PC-3 (cell line): ENCODE measurements at regions of chr5 and their contacts with region 1.

Region 1: GRCh38 chr5:39148983-39149534 is 70.3 kb downstream of the FYB1 start:
- DNase-seq: peak; percentile 74
- ATAC-seq: peak; percentile 69
- H3K4me3 ChIP-seq: no peak overlapping the region
- H3K27ac ChIP-seq: peak overlapping the region; percentile 47; the same call in 1 of the 2 replicates
- H3K4me1 ChIP-seq: peaks cover 7% of the 10 kb centered on the region
- H3K27me3 ChIP-seq: no peaks in the 10 kb centered on the region
- CTCF ChIP-seq: peak; percentile 79

Region 2: DNA sequence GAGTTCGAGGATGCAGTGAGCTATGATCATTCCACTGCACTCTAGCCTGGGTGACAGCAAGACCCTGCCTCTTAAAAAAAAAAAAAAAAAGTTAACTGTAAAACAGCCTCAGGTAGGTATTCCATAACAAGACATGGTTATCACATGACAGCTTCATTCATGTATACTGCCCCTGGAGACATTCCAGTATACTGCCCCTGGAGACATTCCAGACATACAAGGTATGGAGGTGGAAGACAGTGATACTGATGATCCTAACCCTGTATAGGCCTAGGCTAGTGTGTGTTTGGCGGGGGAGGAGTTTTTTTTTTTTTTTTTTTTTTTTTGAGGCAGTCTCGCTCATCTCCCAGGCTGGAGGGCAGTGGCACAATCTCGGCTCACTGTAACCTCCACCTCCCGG is 180.4 kb before region 1 on chr5:
- CTCF ChIA-PET with region 1: no interaction called
- POLR2A ChIA-PET with region 1: no interaction called
- intact Hi-C with region 1: no loop called
- DNase-seq: peak; percentile 11
- ATAC-seq: no peak
- H3K4me3 ChIP-seq: no peak overlapping the region
- H3K27ac ChIP-seq: no peak overlapping the region
- H3K4me1 ChIP-seq: no peaks in the 10 kb centered on the region
- H3K27me3 ChIP-seq: no peaks in the 10 kb centered on the region
- CTCF ChIP-seq: no peak

Region 3: DNA sequence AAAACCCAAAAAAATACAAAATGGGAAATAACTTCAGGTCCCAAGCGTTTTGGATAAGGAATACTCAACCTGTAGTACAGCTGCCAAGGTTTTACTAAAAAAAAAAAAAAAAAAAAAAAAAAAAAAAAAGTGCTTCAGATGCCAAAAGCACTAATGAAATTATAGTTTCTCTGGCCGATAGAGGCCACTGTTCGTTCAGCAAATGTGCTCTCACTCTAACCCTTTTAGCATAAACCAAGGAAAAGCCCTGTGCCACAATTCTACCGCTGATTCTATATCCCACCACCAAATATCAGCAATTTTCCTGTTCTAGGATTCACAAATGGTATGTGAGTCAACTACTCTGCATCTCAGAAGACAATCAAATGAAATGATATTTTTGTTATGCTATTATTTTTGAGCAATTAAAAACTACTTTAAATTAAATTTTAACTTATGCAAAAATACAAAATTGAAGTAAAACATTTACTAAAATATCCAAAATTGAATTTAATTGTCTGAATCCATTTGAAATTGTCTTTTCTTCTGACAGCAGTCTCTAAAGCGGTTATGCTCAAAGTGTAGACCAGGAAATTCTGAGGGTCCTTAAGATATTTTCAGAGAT is 154.6 kb before region 1 on chr5:
- CTCF ChIA-PET with region 1: interaction called, 10 read pairs
- POLR2A ChIA-PET with region 1: no interaction called
- intact Hi-C with region 1: loop called (anchors 1 kb)
- DNase-seq: peak; percentile 89
- ATAC-seq: peak; percentile 78
- H3K4me3 ChIP-seq: no peak overlapping the region
- H3K27ac ChIP-seq: no peak overlapping the region
- H3K4me1 ChIP-seq: no peaks in the 10 kb centered on the region
- H3K27me3 ChIP-seq: no peaks in the 10 kb centered on the region
- CTCF ChIP-seq: peak; percentile 82

Region 4: DNA sequence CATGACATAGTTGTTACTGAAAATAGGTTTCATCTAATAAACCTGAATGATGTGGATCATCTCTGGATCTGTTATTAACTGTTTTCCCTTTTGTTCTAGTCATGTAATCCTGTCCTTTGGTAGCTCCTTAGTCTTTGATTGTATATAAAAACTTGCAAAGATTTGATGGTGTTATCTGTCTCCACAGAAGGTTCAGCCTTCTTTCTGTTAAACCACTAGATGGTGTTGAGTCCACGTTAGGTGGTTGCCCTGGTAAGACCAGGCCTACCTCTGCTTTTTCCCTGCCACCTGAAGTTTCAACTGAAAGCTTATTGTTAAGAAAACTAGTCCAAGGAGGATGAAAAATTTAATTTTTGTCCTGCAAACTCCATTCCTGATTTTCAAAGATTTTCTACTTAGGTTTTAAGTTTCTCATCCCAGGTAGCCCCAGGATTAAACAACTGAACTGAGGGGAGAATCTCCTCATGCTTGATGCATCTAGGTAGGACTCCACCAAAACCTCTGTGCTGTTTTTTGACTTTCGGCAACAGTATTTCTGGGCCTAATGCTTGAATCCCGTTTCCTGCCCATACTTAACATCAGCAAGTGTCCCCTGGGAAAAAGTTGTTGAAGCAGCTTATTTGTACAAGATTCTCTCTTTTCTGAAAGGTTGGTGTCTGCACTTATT is 143.4 kb before region 1 on chr5:
- CTCF ChIA-PET with region 1: no interaction called
- POLR2A ChIA-PET with region 1: no interaction called
- intact Hi-C with region 1: loop called (anchors 5 kb)
- DNase-seq: peak; percentile 55
- ATAC-seq: peak; percentile 79
- H3K4me3 ChIP-seq: no peak overlapping the region
- H3K27ac ChIP-seq: no peak overlapping the region
- H3K4me1 ChIP-seq: no peaks in the 10 kb centered on the region
- H3K27me3 ChIP-seq: no peaks in the 10 kb centered on the region
- CTCF ChIP-seq: peak; percentile 80

Region 5: DNA sequence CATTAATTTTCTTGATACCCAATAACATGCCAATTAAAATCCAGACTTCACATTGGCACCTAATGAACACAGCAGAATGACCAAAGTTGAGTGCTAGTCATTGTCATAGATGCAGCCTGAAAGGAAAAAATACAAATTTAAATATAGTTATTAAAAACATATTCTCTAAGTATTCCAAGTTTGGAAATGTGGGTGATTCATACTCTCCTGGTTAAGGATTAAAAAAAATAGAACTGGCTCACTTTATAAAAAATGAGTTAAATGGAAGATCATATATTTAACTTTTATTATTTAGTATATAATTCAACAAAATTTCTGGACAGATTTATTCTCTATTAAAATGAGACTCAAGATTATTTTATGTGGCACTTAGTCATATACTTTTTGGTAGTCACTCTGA is 41.7 kb before region 1 on chr5:
- CTCF ChIA-PET with region 1: no interaction called
- POLR2A ChIA-PET with region 1: no interaction called
- intact Hi-C with region 1: loop called (anchors 1 kb)
- DNase-seq: no peak
- ATAC-seq: peak; percentile 59; the same call in 1 of the 2 replicates
- H3K4me3 ChIP-seq: no peak overlapping the region
- H3K27ac ChIP-seq: 0 out of 2 replicates have a peak overlapping the region, but pooled peaks have one; percentile 4
- H3K4me1 ChIP-seq: peaks cover 39% of the 10 kb centered on the region
- H3K27me3 ChIP-seq: no peaks in the 10 kb centered on the region
- CTCF ChIP-seq: no peak

Region 6: DNA sequence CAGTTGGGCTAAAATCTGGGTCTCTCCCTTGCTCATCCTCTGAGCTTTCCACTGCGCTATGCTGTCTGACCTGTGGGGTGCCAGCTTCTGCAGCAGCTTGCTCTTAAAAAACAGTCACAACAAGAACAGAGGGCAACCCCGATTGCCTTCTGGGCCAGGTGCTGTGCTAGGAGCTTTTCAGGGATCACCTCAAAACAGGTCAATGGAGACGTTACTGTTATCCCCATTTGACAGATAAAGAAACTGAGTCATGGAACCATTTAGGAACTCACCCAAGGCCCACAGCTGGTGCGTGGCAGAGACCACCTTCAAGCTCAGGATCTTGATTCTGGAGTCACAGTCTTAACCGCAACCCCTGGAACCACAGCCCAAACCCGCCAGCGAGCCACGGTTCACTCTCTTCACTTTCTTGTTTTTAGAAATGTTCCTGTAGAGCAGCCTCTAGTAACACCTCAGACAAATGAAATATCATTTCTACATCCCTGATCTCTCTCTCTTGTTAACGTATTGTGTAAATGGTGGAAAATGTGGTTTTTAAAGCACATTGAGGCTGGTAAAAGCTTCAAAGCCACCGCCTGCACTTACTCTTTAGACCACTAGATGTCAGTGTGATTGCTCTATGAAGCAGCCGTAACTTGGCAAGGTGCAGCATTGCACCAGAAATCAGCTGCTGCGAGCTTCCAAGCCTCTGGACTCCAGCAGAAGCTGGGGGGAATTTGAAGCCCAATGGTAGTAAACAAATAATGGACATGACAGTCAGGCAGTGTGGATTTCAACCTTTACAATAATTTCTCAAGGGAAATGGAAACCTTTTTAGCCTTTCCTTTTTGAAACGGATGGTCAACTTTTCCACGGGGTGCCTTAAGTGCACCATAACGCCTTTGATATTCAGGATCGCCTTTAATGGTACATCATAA is 68.6 kb after region 1 on chr5:
- CTCF ChIA-PET with region 1: no interaction called
- POLR2A ChIA-PET with region 1: no interaction called
- intact Hi-C with region 1: loop called (anchors 2 kb)
- DNase-seq: peak; percentile 95
- ATAC-seq: peak; percentile 39; the same call in 1 of the 2 replicates
- H3K4me3 ChIP-seq: no peak overlapping the region
- H3K27ac ChIP-seq: no peak overlapping the region
- H3K4me1 ChIP-seq: peaks cover 25% of the 10 kb centered on the region
- H3K27me3 ChIP-seq: no peaks in the 10 kb centered on the region
- CTCF ChIP-seq: peak; percentile 99

Region 7: GRCh38 chr5:39249564-39250274 is 100.7 kb after region 1 on chr5:
- CTCF ChIA-PET with region 1: interaction called, 12 read pairs
- POLR2A ChIA-PET with region 1: no interaction called
- intact Hi-C with region 1: no loop called
- DNase-seq: no peak
- ATAC-seq: no peak
- H3K4me3 ChIP-seq: no peak overlapping the region
- H3K27ac ChIP-seq: no peak overlapping the region
- H3K4me1 ChIP-seq: peaks cover 9% of the 10 kb centered on the region
- H3K27me3 ChIP-seq: no peaks in the 10 kb centered on the region
- CTCF ChIP-seq: no peak

Region 8: GRCh38 chr5:39283231-39283818 is 134.3 kb after region 1 on chr5:
- CTCF ChIA-PET with region 1: no interaction called
- POLR2A ChIA-PET with region 1: no interaction called
- intact Hi-C with region 1: loop called (anchors 1 kb)
- DNase-seq: peak; percentile 90
- ATAC-seq: peak; percentile 97
- H3K4me3 ChIP-seq: no peak overlapping the region
- H3K27ac ChIP-seq: no peak overlapping the region
- H3K4me1 ChIP-seq: peaks cover 7% of the 10 kb centered on the region
- H3K27me3 ChIP-seq: no peaks in the 10 kb centered on the region
- CTCF ChIP-seq: peak; percentile 94

Region 9: DNA sequence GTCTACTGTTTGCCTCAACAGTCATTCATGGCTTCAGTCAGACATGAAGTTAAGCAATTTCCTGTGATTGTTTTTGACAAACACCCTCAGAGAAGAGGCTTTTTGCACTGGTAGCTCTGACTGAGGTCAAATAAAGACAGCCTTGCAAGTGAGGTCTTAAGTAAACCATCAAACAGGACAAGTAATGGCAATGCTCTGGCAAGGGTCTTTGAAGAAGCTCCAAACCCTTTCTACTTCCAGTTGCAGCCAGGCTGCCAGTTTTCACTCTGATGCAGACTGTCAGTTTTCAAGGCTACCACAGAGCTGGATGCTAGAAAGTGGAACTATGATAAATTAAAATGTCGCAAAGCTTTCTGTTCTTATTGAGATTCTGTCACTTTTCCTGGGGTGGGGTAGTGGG is 1109.2 kb after region 1 on chr5:
- CTCF ChIA-PET with region 1: no interaction called
- POLR2A ChIA-PET with region 1: no interaction called
- intact Hi-C with region 1: no loop called
- DNase-seq: no peak
- ATAC-seq: no peak
- H3K4me3 ChIP-seq: no peak overlapping the region
- H3K27ac ChIP-seq: no peak overlapping the region
- H3K4me1 ChIP-seq: no peaks in the 10 kb centered on the region
- H3K27me3 ChIP-seq: no peaks in the 10 kb centered on the region
- CTCF ChIP-seq: no peak